Ascending aorta (tissue), 2 donors: ENCODE measurements at regions of chr3 and their contacts with region 1.

Region 1: GRCh38 chr3:107660306-107660976 is 137.7 kb downstream of the BBX start:
- DNase-seq: no peak
- H3K4me3 ChIP-seq: no peak overlapping the region
- H3K27ac ChIP-seq: no peak overlapping the region
- H3K4me1 ChIP-seq: peaks cover 3 to 33% of the 10 kb centered on the region in 2 donors
- H3K27me3 ChIP-seq: no peaks in the 10 kb centered on the region
- CTCF ChIP-seq: peak; percentile 24 to 67 (median 56)

Region 2: DNA sequence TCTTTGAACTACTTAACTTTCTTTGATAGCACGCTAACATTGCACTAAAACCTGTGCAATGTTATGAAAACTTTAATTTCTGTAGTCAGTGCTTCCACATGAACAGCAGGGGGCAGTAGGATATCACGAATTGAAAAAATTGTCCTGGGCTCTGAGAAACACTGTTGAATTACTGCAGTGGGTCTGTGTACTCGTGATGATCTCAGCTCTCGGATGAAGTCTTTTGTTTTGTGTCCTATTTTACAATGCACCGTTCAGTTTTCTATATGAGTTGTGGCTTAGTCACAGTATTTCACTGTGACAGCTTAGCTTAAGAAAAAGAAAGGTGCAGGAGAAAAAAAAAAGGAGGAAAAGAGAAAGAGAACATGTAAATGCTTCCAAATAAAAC is 424.5 kb before region 1 on chr3:
- intact Hi-C with region 1: loop called (anchors 5 kb)
- DNase-seq: no peak
- H3K4me3 ChIP-seq: peak overlapping the region; percentile 49 to 70
- H3K27ac ChIP-seq: peak overlapping the region; percentile 15 to 58
- H3K4me1 ChIP-seq: peaks cover 0 to 6% of the 10 kb centered on the region in 2 donors
- H3K27me3 ChIP-seq: no peaks in the 10 kb centered on the region
- CTCF ChIP-seq: peak; percentile 66 to 88 (median 85)

Region 3: DNA sequence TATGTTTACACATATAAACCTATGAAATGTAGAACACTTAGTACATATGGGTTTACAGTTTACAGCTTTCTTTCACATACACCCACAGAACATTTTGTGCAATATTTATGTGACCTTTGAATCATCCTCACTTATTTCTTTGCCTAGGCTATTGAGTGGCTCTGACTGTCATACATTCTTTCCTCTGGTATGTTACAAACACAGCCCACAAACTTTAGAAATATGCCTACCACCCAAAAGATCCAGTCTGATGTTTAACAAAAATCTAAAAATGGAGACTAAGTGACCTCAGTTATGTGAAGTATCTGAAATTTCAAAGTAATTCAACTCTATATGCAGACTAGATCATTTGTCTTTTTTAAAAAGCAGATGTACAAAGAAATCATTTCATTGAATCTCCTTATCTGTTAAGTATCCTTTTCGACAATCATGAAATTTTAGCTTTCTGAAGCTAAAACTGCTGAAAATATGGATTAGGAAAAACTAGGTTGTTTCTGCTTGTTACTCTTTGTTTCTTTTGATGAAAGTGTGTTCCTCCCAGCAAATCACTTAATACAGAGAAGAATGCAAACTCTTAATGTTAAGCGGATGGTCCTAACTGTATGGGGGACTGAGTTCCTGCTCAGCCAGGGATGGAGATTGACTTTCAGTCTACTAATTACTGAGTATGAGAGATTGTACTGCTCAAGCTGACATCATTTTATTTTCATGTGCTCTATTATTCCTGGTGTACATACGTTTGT is 255.5 kb before region 1 on chr3:
- intact Hi-C with region 1: no loop called
- DNase-seq: no peak
- H3K4me3 ChIP-seq: no peak overlapping the region
- H3K27ac ChIP-seq: no peak overlapping the region
- H3K4me1 ChIP-seq: no peaks in the 10 kb centered on the region
- H3K27me3 ChIP-seq: no peaks in the 10 kb centered on the region
- CTCF ChIP-seq: no peak

Region 4: GRCh38 chr3:107676469-107677309 is 16.2 kb after region 1 on chr3:
- intact Hi-C with region 1: loop called (anchors 2 kb)
- DNase-seq: no peak
- H3K4me3 ChIP-seq: no peak overlapping the region
- H3K27ac ChIP-seq: no peak overlapping the region
- H3K4me1 ChIP-seq: peaks cover 0 to 18% of the 10 kb centered on the region in 2 donors
- H3K27me3 ChIP-seq: no peaks in the 10 kb centered on the region
- CTCF ChIP-seq: peak; percentile 8 to 66 (median 43)

Region 5: GRCh38 chr3:107794664-107795443 is 134.4 kb after region 1 on chr3:
- intact Hi-C with region 1: loop called (anchors 5 kb)
- DNase-seq: no peak
- H3K4me3 ChIP-seq: no peak overlapping the region
- H3K27ac ChIP-seq: peak overlapping the region; percentile 15 to 67
- H3K4me1 ChIP-seq: peaks cover 6 to 41% of the 10 kb centered on the region in 2 donors
- H3K27me3 ChIP-seq: no peaks in the 10 kb centered on the region
- CTCF ChIP-seq: peak in 2 of 3 experiments; percentile 30 to 36

Region 6: GRCh38 chr3:107927361-107928083 is 267.1 kb after region 1 on chr3:
- intact Hi-C with region 1: loop called (anchors 5 kb)
- DNase-seq: peak in 1 of 2 donors; percentile 83
- H3K4me3 ChIP-seq: peak overlapping the region; percentile 51 to 75
- H3K27ac ChIP-seq: no peak overlapping the region
- H3K4me1 ChIP-seq: no peaks in the 10 kb centered on the region
- H3K27me3 ChIP-seq: no peaks in the 10 kb centered on the region
- CTCF ChIP-seq: peak; percentile 70 to 96 (median 91)